ENCODE measurements at regions of chr1 and their contacts with region 1.

Region 1: GRCh38 chr1:212608209-212608955 is at the start of gene ATF3:
- DNase-seq: peak; percentile 96 to 99
- H3K4me3 ChIP-seq: peak within 1 kb of the TSS; percentile 51 to 96 (median 74)
- H3K27ac ChIP-seq: peak within 1 kb of the TSS; percentile 71; the same call in 1 of the 2 replicates
- H3K4me1 ChIP-seq: peaks cover 14 to 41% (median 26%) of the 10 kb centered on the region in 4 experiments
- H3K27me3 ChIP-seq: peaks cover 10 to 38% (median 27%) of the 10 kb centered on the region in 4 experiments; a peak in 6 of 7 replicates
- CTCF ChIP-seq: no peak
- EP300 ChIP-seq: no peak
- POLR2A ChIP-seq: peak; percentile 99
- RAD21 ChIP-seq: peak in 1 of 2 experiments; percentile 13; a peak in 1 of 4 replicates
- total RNA-seq, gene ATF3: 21.5 and 27.7 TPM in 2 replicates

Region 2: DNA sequence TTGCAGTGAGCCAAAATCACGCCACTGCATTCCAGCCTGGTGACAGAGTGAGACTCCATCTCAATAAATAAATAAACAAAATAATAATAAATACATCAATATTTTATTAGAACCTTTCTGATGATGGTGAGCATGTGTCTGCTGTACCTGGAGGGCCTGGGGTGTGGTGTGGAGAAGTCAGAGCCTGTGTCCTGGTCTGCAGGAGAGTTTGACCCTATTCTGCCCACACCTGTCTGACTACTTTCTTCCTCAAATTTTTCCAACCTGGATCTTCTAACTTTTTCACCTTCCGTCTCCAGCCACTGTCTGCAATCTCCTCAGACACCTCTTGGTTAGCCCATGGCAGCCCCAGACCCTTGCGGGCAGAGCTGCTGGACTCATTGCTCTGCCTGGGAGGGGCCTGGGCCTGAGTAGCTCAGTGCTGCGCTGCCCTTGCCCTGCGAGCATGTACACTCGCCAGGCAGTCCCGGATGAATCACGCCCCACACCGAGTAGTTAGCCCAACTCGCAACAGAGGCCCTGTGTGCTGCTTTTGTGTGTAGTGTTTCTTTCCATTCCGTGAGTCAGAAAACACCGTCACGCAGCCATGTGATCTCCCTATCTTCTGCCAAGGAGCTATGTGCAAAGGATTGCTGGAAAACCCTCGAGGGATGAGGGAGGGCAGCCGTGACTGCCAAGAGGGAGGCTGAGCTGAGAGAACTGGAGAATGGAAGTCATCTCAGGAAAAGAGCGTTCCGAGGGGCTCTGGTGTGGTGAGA is 138.5 kb before region 1 on chr1:
- CTCF ChIA-PET with region 1: no interaction called
- POLR2A ChIA-PET with region 1: interaction called, 25 read pairs
- DNase-seq: no peak
- H3K4me3 ChIP-seq: no peak overlapping the region
- H3K27ac ChIP-seq: no peak overlapping the region
- H3K4me1 ChIP-seq: no peaks in the 10 kb centered on the region; a peak in 1 of 7 replicates
- H3K27me3 ChIP-seq: no peaks in the 10 kb centered on the region
- CTCF ChIP-seq: no peak
- EP300 ChIP-seq: no peak
- POLR2A ChIP-seq: no peak
- RAD21 ChIP-seq: no peak

Region 3: GRCh38 chr1:212558693-212559480 is 49.5 kb before region 1 on chr1:
- CTCF ChIA-PET with region 1: no interaction called
- POLR2A ChIA-PET with region 1: interaction called, 61 read pairs
- DNase-seq: peak; percentile 53 to 95
- H3K4me3 ChIP-seq: peak overlapping the region; percentile 54 to 68 (median 60)
- H3K27ac ChIP-seq: peak overlapping the region; percentile 29; the same call in 1 of the 2 replicates
- H3K4me1 ChIP-seq: peaks cover 0 to 8% (median 2%) of the 10 kb centered on the region in 4 experiments; a peak in 6 of 7 replicates
- H3K27me3 ChIP-seq: peaks cover 0 to 13% (median 5%) of the 10 kb centered on the region in 4 experiments; a peak in 4 of 7 replicates
- CTCF ChIP-seq: no peak
- EP300 ChIP-seq: peak in 1 of 2 experiments; percentile 35; a peak in 1 of 3 replicates
- POLR2A ChIP-seq: 0 out of 3 replicates have a peak, but pooled peaks of 1 of the 2 experiments have one; percentile 55
- RAD21 ChIP-seq: no peak

Region 4: DNA sequence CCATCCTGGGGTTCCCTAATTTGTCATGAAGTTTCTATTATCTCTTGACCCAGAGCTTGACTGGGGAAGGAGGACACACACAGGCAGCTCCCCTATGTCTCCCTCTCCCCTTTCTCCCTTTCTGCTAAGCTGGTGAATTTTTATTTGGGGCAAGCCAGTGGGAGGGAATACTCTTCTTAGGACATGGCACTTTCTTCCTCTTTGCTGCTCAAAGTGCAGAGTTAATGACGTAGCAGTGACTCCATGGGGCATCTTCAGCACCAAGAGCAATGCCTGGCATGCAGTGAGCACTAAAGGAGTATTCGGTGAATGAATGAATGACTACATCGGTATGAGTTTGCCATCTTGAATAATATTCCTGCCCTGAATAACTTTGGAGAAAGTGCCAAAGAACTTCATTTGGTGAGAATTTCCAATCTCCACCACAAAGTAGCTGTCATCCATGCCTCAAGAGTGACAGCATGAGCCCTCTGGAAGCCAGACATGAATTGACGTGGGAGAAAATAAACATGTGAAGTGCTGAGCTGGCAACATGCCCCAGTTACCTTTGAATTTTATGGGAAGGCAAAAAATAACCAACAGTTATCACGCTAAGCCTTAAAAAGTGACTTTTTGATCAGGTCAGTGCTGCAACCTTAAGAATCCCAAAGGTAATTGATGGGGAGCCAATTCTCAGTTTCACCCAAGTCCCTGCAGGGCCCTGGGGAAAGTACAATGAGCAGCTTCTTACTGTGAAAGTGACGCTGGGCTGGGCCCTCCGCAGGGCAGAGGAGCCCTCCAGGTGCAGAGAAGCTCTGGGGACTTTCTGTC is 22.0 kb before region 1 on chr1:
- CTCF ChIA-PET with region 1: interaction called, 5 read pairs
- POLR2A ChIA-PET with region 1: interaction called, 14 read pairs
- DNase-seq: no peak
- H3K4me3 ChIP-seq: no peak overlapping the region
- H3K27ac ChIP-seq: no peak overlapping the region
- H3K4me1 ChIP-seq: peaks cover 0 to 9% (median 5%) of the 10 kb centered on the region in 4 experiments; a peak in 4 of 7 replicates
- H3K27me3 ChIP-seq: no peaks in the 10 kb centered on the region
- CTCF ChIP-seq: no peak
- EP300 ChIP-seq: no peak
- POLR2A ChIP-seq: no peak
- RAD21 ChIP-seq: no peak

Region 5: DNA sequence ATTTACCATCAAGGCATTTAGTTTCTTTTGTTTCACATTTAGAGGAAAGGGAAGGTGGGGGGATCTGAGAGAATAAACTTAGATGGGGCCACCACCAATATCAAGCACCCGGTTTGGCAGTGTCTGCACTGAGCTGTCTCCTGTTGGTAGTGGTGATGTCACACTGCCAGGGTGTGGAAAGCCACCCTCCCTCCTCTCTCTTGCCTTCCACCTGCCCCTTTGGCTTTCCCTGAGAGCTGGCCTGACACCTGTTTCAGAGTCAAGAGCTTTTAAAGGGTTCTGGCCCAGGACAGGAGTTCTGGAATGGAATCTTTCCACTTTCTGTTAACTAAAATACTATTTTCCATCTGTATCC is 13.5 kb after region 1 on chr1:
- CTCF ChIA-PET with region 1: interaction called, 7 read pairs
- POLR2A ChIA-PET with region 1: interaction called, 94 read pairs
- DNase-seq: no peak
- H3K4me3 ChIP-seq: no peak overlapping the region
- H3K27ac ChIP-seq: no peak overlapping the region
- H3K4me1 ChIP-seq: no peaks in the 10 kb centered on the region
- H3K27me3 ChIP-seq: no peaks in the 10 kb centered on the region
- CTCF ChIP-seq: no peak
- EP300 ChIP-seq: no peak
- POLR2A ChIP-seq: no peak
- RAD21 ChIP-seq: no peak

Region 6: DNA sequence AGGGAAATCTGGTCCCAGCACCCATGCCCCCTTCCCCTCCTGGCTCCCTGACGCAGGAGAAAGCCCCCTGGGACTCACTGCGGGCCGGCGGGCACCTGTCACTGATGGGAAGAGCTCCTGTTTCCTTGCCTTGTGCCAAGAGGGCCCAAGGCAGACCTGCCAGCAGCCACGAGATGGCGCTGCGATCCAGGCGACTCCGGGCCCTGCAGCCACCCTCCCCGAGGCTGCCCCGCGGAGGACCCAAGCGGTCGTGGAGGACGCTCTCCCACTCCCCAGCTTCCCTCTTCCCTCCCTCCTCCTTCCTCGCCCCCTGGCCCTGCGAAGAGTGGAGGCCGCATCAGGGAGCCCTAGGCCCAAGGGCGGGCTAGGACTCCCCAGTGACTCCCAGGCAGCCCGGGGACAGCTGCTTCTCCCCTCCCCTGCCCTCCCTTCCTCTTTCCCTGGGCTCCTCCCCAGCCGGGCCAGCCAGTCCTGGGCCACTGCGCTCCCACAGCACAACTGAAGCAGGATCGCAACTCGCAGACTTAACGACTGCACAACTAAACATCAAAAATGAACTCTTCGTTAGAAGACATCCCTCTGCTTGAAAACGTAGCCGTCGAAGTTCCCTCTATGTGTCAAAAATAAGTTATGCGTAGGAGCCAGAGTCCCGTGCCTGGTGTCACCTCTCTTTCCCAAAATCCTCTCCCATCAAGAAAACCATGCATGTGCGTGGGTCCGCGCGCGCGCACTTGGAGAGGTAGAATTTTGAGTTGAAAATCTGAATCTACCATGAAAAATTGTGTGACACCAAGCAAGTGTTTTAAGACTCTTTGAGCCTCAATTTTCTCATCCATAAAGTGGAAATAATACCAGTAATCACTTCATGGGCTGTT is 57.1 kb after region 1 on chr1:
- CTCF ChIA-PET with region 1: interaction called, 5 read pairs
- POLR2A ChIA-PET with region 1: interaction called, 39 read pairs
- DNase-seq: peak in 1 of 2 experiments; percentile 95
- H3K4me3 ChIP-seq: peak overlapping the region; percentile 34 to 77 (median 62)
- H3K27ac ChIP-seq: no peak overlapping the region
- H3K4me1 ChIP-seq: no peaks in the 10 kb centered on the region; a peak in 1 of 7 replicates
- H3K27me3 ChIP-seq: peaks cover 0 to 9% (median 5%) of the 10 kb centered on the region in 4 experiments; a peak in 4 of 7 replicates
- CTCF ChIP-seq: peak; percentile 95 to 96 (median 96)
- EP300 ChIP-seq: no peak
- POLR2A ChIP-seq: no peak
- RAD21 ChIP-seq: peak; percentile 90 to 94

Region 7: DNA sequence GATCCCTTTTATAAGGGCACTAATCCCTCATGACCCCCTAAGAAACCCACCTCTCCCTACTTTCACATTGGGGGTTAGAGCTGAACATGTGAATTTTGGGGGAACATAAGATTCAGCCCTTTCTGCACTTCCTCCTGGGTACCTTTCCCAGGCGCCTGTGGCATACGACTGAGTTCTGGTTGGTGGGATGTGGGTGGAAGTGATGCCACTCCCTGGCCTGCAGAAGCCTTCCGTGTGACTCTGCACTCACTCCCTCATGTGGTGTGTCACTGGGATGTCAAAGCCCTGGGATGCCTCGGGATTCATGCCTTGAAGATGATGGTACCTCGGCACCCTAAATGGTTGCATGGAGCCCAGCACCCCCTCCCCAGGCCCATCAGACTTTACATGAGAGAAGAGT is 313.6 kb after region 1 on chr1:
- CTCF ChIA-PET with region 1: no interaction called
- POLR2A ChIA-PET with region 1: no interaction called
- DNase-seq: peak in 1 of 2 experiments; percentile 31
- H3K4me3 ChIP-seq: no peak overlapping the region
- H3K27ac ChIP-seq: no peak overlapping the region
- H3K4me1 ChIP-seq: peaks cover 0 to 4% (median 2%) of the 10 kb centered on the region in 4 experiments; a peak in 3 of 7 replicates
- H3K27me3 ChIP-seq: no peaks in the 10 kb centered on the region
- CTCF ChIP-seq: no peak
- EP300 ChIP-seq: no peak
- POLR2A ChIP-seq: no peak
- RAD21 ChIP-seq: no peak